ENCODE measurements at regions of chr11 and their contacts with region 1.

Region 1: DNA sequence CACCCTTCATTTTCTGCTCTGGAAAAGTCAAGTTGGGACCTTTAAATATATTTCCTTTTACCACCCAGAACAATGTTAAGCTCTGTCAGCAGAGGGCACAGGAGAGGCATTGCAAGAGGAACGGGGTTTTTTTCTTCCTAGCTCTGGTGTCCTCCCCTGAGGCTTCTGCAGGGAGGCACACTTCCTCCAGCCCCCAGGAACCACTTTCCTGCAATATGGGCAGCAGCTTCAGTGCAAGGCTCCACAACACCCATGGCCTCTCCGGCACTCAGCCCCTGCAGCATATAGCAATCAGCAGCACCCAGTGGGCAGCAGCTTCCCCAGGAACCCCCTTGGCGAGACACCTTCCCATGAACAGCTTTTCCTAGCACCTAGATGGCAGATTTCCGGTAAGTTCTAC is 101.4 kb downstream of the SYT9 start:
- H3K4me3 Mint-ChIP-seq: no peak overlapping the region
- H3K27ac Mint-ChIP-seq: no peak overlapping the region
- H3K4me1 Mint-ChIP-seq: no peaks in the 10 kb centered on the region
- H3K27me3 Mint-ChIP-seq: peaks cover 2% of the 10 kb centered on the region

Region 2: GRCh38 chr11:7341551-7341950 is 11.5 kb before region 1 on chr11:
- intact Hi-C with region 1: no loop called
- H3K4me3 Mint-ChIP-seq: no peak overlapping the region
- H3K27ac Mint-ChIP-seq: no peak overlapping the region
- H3K4me1 Mint-ChIP-seq: no peaks in the 10 kb centered on the region
- H3K27me3 Mint-ChIP-seq: peaks cover 11% of the 10 kb centered on the region

Region 3: DNA sequence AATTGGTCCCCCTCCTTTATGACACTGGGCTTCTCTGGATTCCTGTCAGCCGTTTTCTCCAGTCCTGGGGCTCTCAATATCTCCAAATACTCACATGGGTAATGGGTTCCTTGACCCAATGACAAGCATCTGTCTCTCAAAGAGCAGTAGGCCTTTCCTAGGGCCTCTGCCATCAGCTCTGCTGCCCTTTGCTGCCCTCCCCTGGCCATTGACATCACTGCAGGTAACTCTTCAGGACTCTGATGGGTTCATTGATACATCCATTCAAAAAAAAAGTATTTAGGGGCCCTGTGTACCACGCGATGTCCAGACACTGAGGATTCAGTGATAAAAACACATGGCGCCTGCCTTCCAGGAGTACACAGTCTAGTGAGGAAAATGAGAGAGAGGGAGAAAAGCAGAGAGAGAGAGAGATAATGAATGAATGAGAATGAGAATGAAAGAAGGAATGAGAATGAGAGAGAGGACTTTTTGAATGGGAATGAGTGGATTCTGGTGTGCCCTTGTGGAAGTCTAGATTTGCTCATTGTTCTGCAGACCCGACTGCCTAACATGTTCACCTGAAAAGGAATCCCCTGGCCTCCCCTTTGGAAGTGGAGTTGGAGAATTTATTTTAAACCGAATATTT is 89.6 kb after region 1 on chr11:
- intact Hi-C with region 1: loop called (anchors 1 kb)
- H3K4me3 Mint-ChIP-seq: no peak overlapping the region
- H3K27ac Mint-ChIP-seq: no peak overlapping the region
- H3K4me1 Mint-ChIP-seq: peaks cover 22% of the 10 kb centered on the region
- H3K27me3 Mint-ChIP-seq: peaks cover 4% of the 10 kb centered on the region

Region 4: GRCh38 chr11:7691759-7692350 is 338.8 kb after region 1 on chr11:
- intact Hi-C with region 1: loop called (anchors 2 kb)
- H3K4me3 Mint-ChIP-seq: no peak overlapping the region
- H3K27ac Mint-ChIP-seq: no peak overlapping the region
- H3K4me1 Mint-ChIP-seq: no peaks in the 10 kb centered on the region
- H3K27me3 Mint-ChIP-seq: peaks cover 48% of the 10 kb centered on the region